HCT116 (cell line): ENCODE measurements at regions of chr13 and their contacts with region 1.

Region 1: GRCh38 chr13:75219479-75220237 is 262.3 kb downstream of the TBC1D4 start:
- DNase-seq: peak; percentile 31
- ATAC-seq: peak; percentile 100
- H3K4me3 ChIP-seq: no peak overlapping the region
- H3K27ac ChIP-seq: no peak overlapping the region
- H3K4me1 ChIP-seq: no peaks in the 10 kb centered on the region
- H3K27me3 ChIP-seq: peaks cover 16% of the 10 kb centered on the region; the same call in 1 of the 2 replicates
- CTCF ChIP-seq: peak; percentile 60 to 97 (median 90)
- POLR2A ChIP-seq: no peak
- RAD21 ChIP-seq: peak; percentile 92

Region 2: DNA sequence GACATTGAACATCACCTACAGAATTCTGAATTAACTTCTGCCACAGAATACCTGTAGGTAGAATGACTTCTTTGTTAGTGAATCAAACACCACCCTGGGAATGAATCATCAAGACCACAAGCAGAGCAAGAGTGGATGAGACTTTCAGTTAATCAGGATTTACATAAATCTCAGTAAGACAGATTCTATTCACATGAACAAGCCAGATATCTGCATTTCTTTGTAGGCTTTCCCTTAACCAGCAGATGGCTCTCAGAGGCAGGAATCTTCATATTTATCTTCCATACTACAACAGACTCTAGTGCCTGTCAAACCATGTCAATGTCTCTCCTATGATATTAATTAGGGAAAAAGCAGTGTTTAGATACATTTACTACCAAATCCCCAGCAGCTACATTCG is 1497.5 kb before region 1 on chr13:
- CTCF ChIA-PET with region 1: interaction called, 6 read pairs
- POLR2A ChIA-PET with region 1: no interaction called
- RAD21 ChIA-PET with region 1: no interaction called
- intact Hi-C with region 1: loop called (anchors 2 kb)
- DNase-seq: peak; percentile 51
- ATAC-seq: peak; percentile 84
- H3K4me3 ChIP-seq: no peak overlapping the region
- H3K27ac ChIP-seq: no peak overlapping the region
- H3K4me1 ChIP-seq: peaks cover 0 to 10% of the 10 kb centered on the region in 2 experiments; a peak in 2 of 4 replicates
- H3K27me3 ChIP-seq: no peaks in the 10 kb centered on the region
- CTCF ChIP-seq: peak; percentile 29 to 43 (median 39); a peak in 4 of 6 replicates
- POLR2A ChIP-seq: no peak
- RAD21 ChIP-seq: peak; percentile 56

Region 3: DNA sequence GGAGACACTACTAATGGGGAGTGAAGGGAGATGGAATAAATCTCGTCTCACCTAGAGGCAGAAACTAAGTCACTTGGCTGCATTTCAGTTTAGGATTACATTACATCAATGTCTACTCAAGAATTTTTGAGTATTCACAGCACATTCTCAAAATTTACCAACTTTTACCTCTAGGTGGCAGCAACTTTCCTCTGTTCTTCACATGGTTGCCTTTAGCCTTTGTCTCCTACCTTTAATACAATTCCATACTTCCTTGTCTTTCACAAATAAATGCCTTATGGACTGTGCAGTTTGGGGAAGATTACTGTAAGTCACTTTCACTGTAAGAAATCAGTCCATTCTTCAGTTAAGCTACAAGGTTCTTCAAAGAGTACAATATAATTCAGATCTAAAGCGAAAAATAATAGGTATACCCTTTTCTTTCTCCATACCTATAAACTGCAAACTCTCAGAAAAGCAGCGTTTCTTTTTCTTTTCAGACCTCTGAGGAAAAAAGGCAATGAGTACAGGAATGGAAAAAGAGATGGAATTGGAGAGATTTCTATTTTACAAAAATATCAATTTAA is 1464.8 kb before region 1 on chr13:
- CTCF ChIA-PET with region 1: interaction called, 3 read pairs
- POLR2A ChIA-PET with region 1: no interaction called
- RAD21 ChIA-PET with region 1: interaction called in 1 of 2 experiments, 3 read pairs
- intact Hi-C with region 1: loop called (anchors 1 kb)
- DNase-seq: peak; percentile 40
- ATAC-seq: peak; percentile 81
- H3K4me3 ChIP-seq: no peak overlapping the region
- H3K27ac ChIP-seq: no peak overlapping the region
- H3K4me1 ChIP-seq: no peaks in the 10 kb centered on the region
- H3K27me3 ChIP-seq: no peaks in the 10 kb centered on the region
- CTCF ChIP-seq: peak; percentile 38 to 68 (median 53); a peak in 5 of 6 replicates
- POLR2A ChIP-seq: no peak
- RAD21 ChIP-seq: peak; percentile 73

Region 4: GRCh38 chr13:73835138-73835721 is 1384.4 kb before region 1 on chr13:
- CTCF ChIA-PET with region 1: interaction called, 8 read pairs
- POLR2A ChIA-PET with region 1: no interaction called
- RAD21 ChIA-PET with region 1: no interaction called
- intact Hi-C with region 1: loop called (anchors 1 kb)
- DNase-seq: peak; percentile 22
- ATAC-seq: peak; percentile 69
- H3K4me3 ChIP-seq: no peak overlapping the region
- H3K27ac ChIP-seq: no peak overlapping the region
- H3K4me1 ChIP-seq: no peaks in the 10 kb centered on the region
- H3K27me3 ChIP-seq: no peaks in the 10 kb centered on the region
- CTCF ChIP-seq: peak; percentile 46 to 67 (median 47); a peak in 5 of 6 replicates
- POLR2A ChIP-seq: no peak
- RAD21 ChIP-seq: peak; percentile 65

Region 5: DNA sequence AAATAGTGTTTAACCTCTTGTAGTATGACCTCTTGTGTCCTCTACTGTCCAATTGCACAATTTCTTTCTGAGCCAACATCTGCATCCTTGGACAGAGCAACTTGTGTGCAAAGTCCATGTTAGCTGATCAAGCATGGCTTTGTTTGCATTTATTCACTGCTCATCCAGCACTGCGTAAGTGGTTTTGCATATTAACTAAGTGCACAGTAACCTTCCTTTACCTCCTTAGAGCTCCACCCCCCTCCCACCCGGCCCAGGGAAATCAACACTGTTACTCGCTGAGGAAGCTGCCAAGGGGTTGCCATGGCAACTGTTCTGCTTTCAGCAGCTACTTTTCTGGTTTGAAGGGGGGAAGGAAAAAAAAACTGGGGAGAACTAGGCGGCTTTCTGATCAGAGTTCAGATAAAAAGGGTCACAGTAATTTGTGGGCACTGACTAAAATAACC is 931.9 kb before region 1 on chr13:
- CTCF ChIA-PET with region 1: interaction called, 5 read pairs
- POLR2A ChIA-PET with region 1: no interaction called
- RAD21 ChIA-PET with region 1: no interaction called
- intact Hi-C with region 1: loop called (anchors 5 kb)
- DNase-seq: no peak
- ATAC-seq: no peak
- H3K4me3 ChIP-seq: no peak overlapping the region
- H3K27ac ChIP-seq: no peak overlapping the region
- H3K4me1 ChIP-seq: peaks cover 0 to 3% of the 10 kb centered on the region in 2 experiments; a peak in 1 of 4 replicates
- H3K27me3 ChIP-seq: no peaks in the 10 kb centered on the region
- CTCF ChIP-seq: no peak
- POLR2A ChIP-seq: no peak
- RAD21 ChIP-seq: no peak

Region 6: DNA sequence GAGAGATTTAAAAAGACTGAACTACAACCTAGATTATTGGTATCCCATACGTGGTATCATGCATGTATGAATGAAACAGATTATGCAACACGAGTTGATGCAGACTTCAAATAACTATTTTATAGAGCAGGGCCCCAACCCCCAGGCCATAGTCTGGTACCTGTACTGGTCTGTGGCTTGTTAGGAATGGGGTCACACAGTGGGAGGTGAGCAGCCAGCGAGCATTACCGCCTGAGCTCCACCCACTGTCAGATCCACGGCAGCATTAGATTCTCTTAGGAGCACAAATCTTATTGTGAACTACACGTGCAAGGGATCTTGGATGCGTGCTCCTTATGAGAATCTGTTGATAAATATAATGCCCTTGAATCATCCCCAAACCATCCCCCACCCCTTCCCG is 57.9 kb before region 1 on chr13:
- CTCF ChIA-PET with region 1: no interaction called
- POLR2A ChIA-PET with region 1: no interaction called
- RAD21 ChIA-PET with region 1: no interaction called
- intact Hi-C with region 1: no loop called
- DNase-seq: no peak
- ATAC-seq: no peak
- H3K4me3 ChIP-seq: no peak overlapping the region
- H3K27ac ChIP-seq: no peak overlapping the region
- H3K4me1 ChIP-seq: no peaks in the 10 kb centered on the region
- H3K27me3 ChIP-seq: no peaks in the 10 kb centered on the region
- CTCF ChIP-seq: no peak
- POLR2A ChIP-seq: no peak
- RAD21 ChIP-seq: no peak